ENCODE measurements at regions of chr16 and their contacts with region 1.

Region 1: GRCh38 chr16:67159593-67160406 is at the starts of genes FBXL8 and TRADD:
- DNase-seq: peak; percentile 82
- H3K4me3 ChIP-seq: peak within 1 kb of the TSS; percentile 89
- H3K27ac ChIP-seq: peak within 1 kb of the TSS; percentile 10
- H3K4me1 ChIP-seq: peaks cover 21% of the 10 kb centered on the region
- CTCF ChIP-seq: peak; percentile 86
- total RNA-seq, gene FBXL8: 5.8 and 7.3 TPM in 2 replicates
- total RNA-seq, gene TRADD: 11.3 and 11.6 TPM in 2 replicates

Region 2: DNA sequence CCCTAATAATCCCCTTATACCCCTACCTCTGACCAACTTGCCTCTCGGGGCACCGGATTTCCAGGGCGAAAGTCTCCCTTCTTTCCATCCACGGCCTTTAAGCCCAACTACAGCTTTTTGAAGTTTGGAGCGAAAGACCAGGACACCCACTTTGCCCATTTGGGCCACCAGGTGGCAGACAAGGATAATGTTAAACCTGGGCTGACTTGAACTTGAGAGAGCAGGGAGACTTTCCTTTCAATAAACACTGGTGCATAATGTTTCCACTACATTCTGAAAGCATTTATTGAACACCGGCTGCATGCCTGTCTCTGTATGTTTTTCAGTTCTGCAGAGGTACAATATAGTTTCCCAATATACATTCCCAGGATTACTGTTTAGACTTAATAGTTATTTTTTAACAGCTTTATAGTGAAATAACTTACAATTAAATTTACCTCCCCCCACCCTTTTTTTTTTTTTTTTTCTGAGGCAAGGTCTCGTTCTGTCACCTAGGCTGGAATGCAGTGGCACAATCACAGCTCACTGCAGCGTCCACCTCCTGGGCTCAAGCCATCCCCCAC is 205.6 kb before region 1 on chr16:
- CTCF ChIA-PET with region 1: no interaction called
- POLR2A ChIA-PET with region 1: no interaction called
- intact Hi-C with region 1: loop called (anchors 2 kb)
- DNase-seq: peak; percentile 72
- H3K4me3 ChIP-seq: no peak overlapping the region
- H3K27ac ChIP-seq: no peak overlapping the region
- H3K4me1 ChIP-seq: no peaks in the 10 kb centered on the region
- CTCF ChIP-seq: peak; percentile 95

Region 3: DNA sequence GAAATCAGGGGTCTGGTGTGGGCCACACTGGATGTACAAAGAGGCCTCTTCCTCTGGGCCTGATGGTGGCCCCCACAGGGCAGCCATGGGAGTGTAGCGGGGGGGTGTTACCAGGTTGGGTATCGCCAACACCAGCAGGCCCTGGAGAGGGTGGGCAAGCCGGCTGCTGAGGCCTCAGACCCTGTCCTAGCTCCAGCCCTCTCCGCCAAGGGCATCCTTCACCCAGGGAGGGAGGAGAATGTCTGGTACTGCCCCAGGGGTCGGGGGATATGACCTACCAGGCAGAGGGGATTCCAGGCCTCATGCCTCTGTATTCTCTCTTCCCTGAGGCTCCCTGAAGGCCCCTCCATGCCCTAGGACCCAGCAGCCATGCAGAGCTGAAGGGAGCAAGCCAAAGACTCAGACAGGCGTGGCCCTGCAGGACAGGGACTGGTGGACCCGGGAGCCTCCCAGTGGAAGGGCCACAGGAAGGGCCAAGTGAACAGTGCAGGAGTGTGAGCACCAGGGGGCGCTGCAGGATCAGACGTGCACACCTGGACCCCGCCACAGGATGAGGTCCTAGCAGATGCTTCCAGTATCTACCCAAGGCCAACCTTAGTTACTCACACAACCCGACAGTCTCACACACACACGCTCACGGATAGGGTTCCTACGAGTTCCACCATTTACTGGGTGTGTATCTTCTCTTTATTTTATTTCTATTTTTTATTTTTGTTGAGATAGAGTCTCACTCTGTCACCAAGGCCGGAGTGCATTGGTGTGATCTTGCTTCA is 182.3 kb before region 1 on chr16:
- CTCF ChIA-PET with region 1: no interaction called
- POLR2A ChIA-PET with region 1: no interaction called
- intact Hi-C with region 1: loop called (anchors 1 kb)
- DNase-seq: peak; percentile 88
- H3K4me3 ChIP-seq: no peak overlapping the region
- H3K27ac ChIP-seq: no peak overlapping the region
- H3K4me1 ChIP-seq: no peaks in the 10 kb centered on the region
- CTCF ChIP-seq: peak; percentile 94

Region 4: GRCh38 chr16:67183627-67184328 is 24.0 kb after region 1 on chr16 and contains the start of gene MATCAP1:
- CTCF ChIA-PET with region 1: no interaction called
- POLR2A ChIA-PET with region 1: no interaction called
- intact Hi-C with region 1: loop called (anchors 1 kb)
- DNase-seq: peak; percentile 97
- H3K4me3 ChIP-seq: peak within 1 kb of the TSS; percentile 79
- H3K27ac ChIP-seq: peak within 1 kb of the TSS; percentile 56
- H3K4me1 ChIP-seq: peaks cover 14% of the 10 kb centered on the region
- CTCF ChIP-seq: no peak
- total RNA-seq, gene MATCAP1: 18.0 and 22.9 TPM in 2 replicates

Region 5: DNA sequence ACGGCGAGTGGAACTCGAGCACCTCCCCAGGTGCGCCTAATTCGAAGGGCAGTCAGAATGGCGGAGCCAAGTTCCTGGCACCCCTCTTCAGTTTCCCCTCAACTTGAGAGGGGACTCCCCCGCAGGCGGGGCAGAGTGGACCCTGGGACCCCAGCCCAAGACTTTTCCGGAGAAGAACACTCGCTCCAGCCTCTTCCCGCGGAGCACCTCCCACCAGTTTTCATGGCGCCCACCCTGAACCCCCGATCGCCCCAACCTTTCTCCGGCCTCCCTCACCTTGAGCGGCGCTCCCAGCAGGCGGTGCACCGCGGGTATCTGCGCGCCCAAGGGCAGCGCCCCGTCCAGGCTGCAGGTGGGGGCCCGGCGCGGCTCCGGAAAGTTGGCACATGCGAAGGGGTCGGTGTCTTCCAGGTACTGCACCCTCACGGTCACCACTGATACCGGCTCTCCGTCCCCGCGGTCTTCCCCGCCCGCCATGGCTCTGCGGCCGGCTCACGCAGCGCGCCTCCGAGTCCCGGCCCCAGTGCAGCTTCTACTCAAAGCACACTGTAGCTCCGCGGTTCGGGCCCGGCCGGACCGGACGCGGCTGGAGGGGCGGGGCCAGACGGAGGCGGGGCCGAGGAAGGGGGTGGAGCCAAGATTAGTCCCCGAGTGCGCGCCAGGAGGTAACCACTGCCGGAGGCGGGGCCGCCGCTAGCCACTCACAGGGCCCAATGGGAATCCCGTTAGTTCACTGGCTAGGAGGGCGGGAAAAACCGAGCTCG is 87.3 kb after region 1 on chr16 and contains the start of gene FHOD1:
- CTCF ChIA-PET with region 1: no interaction called
- POLR2A ChIA-PET with region 1: interaction called, 3 read pairs
- intact Hi-C with region 1: loop called (anchors 1 kb)
- DNase-seq: peak; percentile 98
- H3K4me3 ChIP-seq: peak within 1 kb of the TSS; percentile 86
- H3K27ac ChIP-seq: peak within 1 kb of the TSS; percentile 70
- H3K4me1 ChIP-seq: peaks cover 50% of the 10 kb centered on the region
- CTCF ChIP-seq: 0 out of 2 replicates have a peak, but pooled peaks have one; percentile 8
- total RNA-seq, gene FHOD1: 16.0 and 16.5 TPM in 2 replicates

Measured in OCI-LY7 (cell line).